Breast epithelium (tissue), 4 donors: ENCODE measurements at regions of chr13 and their contacts with region 1.

Region 1: GRCh38 chr13:113058988-113059850 is 46.4 kb upstream of the F7 start:
- DNase-seq: no peak
- H3K4me3 ChIP-seq: no peak overlapping the region
- H3K27ac ChIP-seq: no peak overlapping the region
- H3K4me1 ChIP-seq: no peaks in the 10 kb centered on the region
- H3K27me3 ChIP-seq: no peaks in the 10 kb centered on the region
- CTCF ChIP-seq: no peak
- POLR2A ChIP-seq: no peak

Region 2: DNA sequence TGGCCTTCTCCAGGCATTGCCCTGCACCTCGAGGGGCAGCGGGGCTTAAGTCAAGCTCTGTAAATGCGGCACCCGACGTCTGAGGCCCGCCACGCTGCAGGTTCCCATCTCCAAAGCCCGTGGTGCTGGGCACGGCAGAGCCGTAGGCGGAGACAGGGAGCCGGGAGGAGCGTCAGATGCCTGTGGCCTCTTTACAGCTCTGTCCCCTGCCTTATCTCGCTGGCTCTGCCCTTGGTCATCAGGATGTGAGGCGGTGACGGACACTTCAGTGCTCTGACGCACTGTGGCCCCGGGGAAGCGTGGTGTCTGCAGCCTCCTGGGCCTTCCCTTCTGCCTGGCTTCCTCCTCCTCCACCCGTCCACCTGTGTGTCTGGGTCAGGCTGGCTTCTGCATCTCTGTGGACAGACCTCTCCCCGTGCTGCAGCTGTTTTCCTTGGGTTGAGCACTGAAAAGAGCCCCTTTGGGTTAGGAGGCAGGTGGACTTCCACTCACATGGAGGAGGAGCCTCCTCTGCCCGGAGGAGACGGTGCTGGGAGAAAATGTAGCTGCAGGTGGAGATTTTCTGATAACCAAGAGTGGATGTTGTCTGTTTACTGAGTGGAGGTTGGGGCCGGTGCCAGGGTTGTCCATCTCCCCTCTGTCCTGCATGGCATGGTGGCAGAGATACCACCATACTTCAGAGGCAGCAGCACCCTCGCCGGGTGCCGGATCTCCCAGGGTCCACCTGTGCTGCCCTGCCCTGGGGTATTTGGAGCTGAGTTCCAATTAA is 75.6 kb before region 1 on chr13:
- intact Hi-C with region 1: loop called (anchors 1 kb)
- DNase-seq: no peak
- H3K4me3 ChIP-seq: peak overlapping the region in 1 of 3 donors; percentile 53
- H3K27ac ChIP-seq: no peak overlapping the region
- H3K4me1 ChIP-seq: no peaks in the 10 kb centered on the region
- H3K27me3 ChIP-seq: no peaks in the 10 kb centered on the region
- CTCF ChIP-seq: no peak
- POLR2A ChIP-seq: no peak

Region 3: DNA sequence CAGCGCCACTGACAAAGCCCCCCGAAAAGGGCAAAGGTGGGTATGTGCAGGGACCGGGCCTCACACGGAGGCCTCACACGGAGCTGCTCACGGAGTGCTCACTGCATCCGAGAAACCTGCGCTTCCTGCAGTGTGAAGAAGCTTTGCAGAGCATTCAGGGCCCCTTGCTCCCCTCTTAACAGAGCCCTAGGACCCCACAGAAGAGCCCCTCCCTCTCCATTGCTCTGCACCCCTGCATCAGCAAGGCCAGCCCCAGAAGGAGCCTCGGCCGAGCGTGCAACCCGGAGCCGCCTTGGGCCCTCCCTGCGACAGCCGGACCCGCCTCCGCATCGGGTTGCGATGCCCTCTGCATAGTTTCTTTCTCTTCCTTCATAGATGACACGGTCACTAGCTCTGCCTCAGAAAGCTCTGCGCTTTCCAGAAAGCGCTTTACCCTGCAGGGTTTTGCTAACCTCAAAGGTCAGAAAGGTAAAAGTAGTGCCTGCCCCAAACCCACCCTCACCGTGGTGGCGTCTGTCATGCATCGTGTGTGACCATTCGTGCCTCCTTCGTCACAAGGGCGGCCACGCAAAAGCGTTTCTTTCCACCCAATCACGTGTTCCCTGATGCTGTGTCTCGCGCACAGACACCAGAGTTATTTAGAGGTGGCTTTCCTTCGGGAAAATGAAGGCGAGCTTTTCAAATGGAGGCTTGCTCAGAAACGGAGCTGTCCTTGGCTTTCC is 30.6 kb after region 1 on chr13:
- intact Hi-C with region 1: loop called (anchors 1 kb)
- DNase-seq: no peak
- H3K4me3 ChIP-seq: no peak overlapping the region
- H3K27ac ChIP-seq: no peak overlapping the region
- H3K4me1 ChIP-seq: no peaks in the 10 kb centered on the region
- H3K27me3 ChIP-seq: no peaks in the 10 kb centered on the region
- CTCF ChIP-seq: no peak
- POLR2A ChIP-seq: no peak